Activated CD4-positive, alpha-beta T cell treated with anti-CD3 and anti-CD28 coated beads for 36 hours (primary cell): ENCODE measurements at regions of chr17 and their contacts with region 1.

Region 1: DNA sequence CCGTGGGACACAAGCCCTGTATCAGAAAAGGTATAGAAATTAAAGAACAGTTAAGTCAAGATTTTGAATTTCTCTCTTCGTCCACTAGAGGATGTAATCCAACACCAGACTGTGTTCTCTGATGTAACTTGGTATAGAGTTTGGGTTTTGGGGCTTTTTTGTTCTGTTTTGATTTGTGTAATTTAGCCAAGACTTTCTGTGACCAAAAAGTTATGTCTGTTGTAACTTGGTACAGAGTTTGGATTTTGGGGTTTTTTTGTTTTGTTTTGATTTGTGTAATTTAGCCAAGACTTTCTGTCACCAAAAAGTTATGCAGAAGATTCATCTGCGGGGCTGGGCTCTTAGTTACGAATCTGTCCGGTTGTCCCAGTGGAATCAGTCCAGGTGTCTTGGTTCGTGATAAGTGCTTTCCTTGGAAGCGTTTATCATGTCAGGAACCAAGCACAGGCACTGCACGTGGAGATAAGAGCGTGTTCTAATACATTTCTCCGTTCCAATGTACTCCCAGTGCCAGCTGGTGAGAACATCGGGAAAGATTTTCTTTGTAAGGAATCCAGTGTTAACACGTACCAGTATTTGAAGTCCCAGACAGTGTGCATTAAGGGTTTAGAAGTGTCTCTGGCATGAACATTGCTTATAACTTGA is 44.1 kb upstream of the SEC14L1 start:
- DNase-seq: no peak
- ATAC-seq: peak; percentile 65
- H3K4me3 Mint-ChIP-seq: no peak overlapping the region
- H3K27ac Mint-ChIP-seq: peak overlapping the region; percentile 86
- H3K4me1 Mint-ChIP-seq: peaks cover 45% of the 10 kb centered on the region
- H3K27me3 Mint-ChIP-seq: no peaks in the 10 kb centered on the region

Region 2: GRCh38 chr17:76501018-76501826 is 595.5 kb before region 1 on chr17 and contains the start of gene RHBDF2:
- CTCF ChIA-PET with region 1: no interaction called
- POLR2A ChIA-PET with region 1: no interaction called
- intact Hi-C with region 1: no loop called
- DNase-seq: peak; percentile 98
- ATAC-seq: peak; percentile 91
- H3K4me3 Mint-ChIP-seq: peak within 1 kb of the TSS; percentile 87
- H3K27ac Mint-ChIP-seq: peak within 1 kb of the TSS; percentile 94
- H3K4me1 Mint-ChIP-seq: peaks cover 29% of the 10 kb centered on the region
- H3K27me3 Mint-ChIP-seq: no peaks in the 10 kb centered on the region
- total RNA-seq, gene RHBDF2: 23.9 to 28.4 TPM

Region 3: GRCh38 chr17:77109764-77110359 is 13.2 kb after region 1 on chr17:
- CTCF ChIA-PET with region 1: no interaction called
- POLR2A ChIA-PET with region 1: no interaction called
- intact Hi-C with region 1: no loop called
- DNase-seq: no peak
- ATAC-seq: no peak
- H3K4me3 Mint-ChIP-seq: no peak overlapping the region
- H3K27ac Mint-ChIP-seq: peak overlapping the region; percentile 29
- H3K4me1 Mint-ChIP-seq: peaks cover 15% of the 10 kb centered on the region
- H3K27me3 Mint-ChIP-seq: no peaks in the 10 kb centered on the region

Region 4: GRCh38 chr17:77186141-77186604 is 89.5 kb after region 1 on chr17:
- CTCF ChIA-PET with region 1: interaction called, 3 read pairs
- POLR2A ChIA-PET with region 1: no interaction called
- intact Hi-C with region 1: loop called in 1 of 2 experiments (anchors 5 kb)
- DNase-seq: peak; percentile 51
- ATAC-seq: peak; percentile 18
- H3K4me3 Mint-ChIP-seq: no peak overlapping the region
- H3K27ac Mint-ChIP-seq: no peak overlapping the region
- H3K4me1 Mint-ChIP-seq: peaks cover 24% of the 10 kb centered on the region
- H3K27me3 Mint-ChIP-seq: no peaks in the 10 kb centered on the region

Region 5: GRCh38 chr17:77451245-77451893 is 354.7 kb after region 1 on chr17:
- CTCF ChIA-PET with region 1: no interaction called
- POLR2A ChIA-PET with region 1: no interaction called
- intact Hi-C with region 1: no loop called
- DNase-seq: peak; percentile 85
- ATAC-seq: peak; percentile 24
- H3K4me3 Mint-ChIP-seq: peak overlapping the region; percentile 96
- H3K27ac Mint-ChIP-seq: peak overlapping the region; percentile 98
- H3K4me1 Mint-ChIP-seq: peaks cover 47% of the 10 kb centered on the region
- H3K27me3 Mint-ChIP-seq: no peaks in the 10 kb centered on the region

Region 6: DNA sequence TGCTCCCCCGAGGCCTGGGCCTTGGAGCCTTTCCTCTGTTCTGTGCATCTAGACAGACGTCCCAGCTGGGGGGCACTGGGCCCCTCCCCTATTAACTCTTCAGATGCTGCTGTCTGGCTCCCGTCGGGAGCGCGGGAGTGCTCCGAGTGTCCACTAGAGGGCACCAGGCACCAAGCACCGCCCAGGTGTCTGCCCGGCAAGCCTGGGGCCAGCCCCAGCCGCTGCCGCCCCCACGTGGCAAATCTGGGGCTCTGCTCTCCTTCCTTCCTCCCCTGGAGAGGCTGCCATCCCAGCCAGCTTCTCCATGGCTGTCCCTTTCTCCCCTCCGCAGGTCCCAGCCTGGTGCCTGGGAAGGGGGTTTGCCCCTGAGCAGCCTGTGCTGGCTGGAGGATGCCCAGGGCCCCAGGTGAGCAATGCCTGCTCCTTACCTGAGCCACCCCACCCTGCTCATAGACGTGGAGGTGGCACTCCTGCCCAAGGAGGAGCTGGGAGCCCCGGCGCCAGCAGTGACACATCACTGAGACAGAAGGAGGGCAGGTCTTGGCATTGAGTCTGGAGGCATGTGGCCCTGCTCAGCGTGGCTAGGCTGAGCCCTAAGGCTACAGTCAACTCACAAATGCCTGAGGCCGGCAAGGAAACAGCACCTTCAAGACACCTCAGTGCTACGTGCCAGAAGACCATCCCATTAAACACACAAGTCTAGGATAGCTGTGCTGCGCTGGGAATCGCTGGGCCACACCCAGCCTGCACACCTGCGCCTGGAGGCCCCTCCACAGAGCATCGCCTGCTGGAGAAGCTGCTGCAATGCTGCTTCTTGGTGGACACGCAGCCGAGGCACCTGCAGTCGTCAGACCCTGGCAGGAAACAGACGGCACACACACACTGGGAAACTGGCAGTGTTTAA is 1154.5 kb after region 1 on chr17:
- CTCF ChIA-PET with region 1: no interaction called
- POLR2A ChIA-PET with region 1: no interaction called
- intact Hi-C with region 1: no loop called
- DNase-seq: peak; percentile 94
- ATAC-seq: peak; percentile 70
- H3K4me3 Mint-ChIP-seq: peak overlapping the region; percentile 41
- H3K27ac Mint-ChIP-seq: peak overlapping the region; percentile 63
- H3K4me1 Mint-ChIP-seq: peaks cover 42% of the 10 kb centered on the region
- H3K27me3 Mint-ChIP-seq: no peaks in the 10 kb centered on the region